AG04450 (cell line): ENCODE measurements at regions of chr19 and their contacts with region 1.

Region 1: DNA sequence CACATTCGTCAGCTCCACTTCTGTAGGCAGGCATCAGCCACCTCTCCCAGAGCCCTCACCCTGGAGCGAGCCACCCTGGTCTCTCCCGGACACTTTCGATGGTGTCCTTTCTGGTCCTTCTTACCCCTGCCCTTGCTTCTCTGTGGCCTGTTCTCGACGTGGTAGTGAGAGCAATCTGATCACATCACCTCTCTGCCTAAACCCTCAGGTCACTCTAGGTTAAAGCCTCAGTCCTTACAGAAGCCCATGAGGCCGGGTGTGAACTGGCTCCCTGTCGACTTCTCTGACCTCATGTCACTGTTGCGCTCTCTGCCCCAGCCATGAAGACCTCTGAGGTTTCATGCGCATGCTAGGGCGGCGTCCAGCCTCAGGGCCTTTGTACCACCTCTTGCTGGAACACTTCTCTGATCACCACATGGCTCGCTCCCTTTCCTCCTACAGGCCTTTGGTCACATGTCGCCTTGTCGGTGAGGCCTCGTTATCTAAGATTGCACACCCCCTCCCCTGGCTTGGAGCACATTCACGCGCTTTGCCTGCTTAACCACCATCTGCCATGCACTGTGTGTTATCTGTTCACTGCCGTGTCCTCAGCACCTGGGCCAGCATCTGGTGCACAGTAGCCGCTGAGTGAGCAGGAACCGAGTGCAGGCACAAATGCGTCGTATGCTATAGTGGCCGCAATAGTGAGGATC is 101.5 kb downstream of the DPF1 start:
- DNase-seq: no peak
- H3K4me3 ChIP-seq: no peak overlapping the region
- H3K27ac ChIP-seq: no peak overlapping the region
- H3K27me3 ChIP-seq: no peaks in the 10 kb centered on the region
- CTCF ChIP-seq: no peak

Region 2: DNA sequence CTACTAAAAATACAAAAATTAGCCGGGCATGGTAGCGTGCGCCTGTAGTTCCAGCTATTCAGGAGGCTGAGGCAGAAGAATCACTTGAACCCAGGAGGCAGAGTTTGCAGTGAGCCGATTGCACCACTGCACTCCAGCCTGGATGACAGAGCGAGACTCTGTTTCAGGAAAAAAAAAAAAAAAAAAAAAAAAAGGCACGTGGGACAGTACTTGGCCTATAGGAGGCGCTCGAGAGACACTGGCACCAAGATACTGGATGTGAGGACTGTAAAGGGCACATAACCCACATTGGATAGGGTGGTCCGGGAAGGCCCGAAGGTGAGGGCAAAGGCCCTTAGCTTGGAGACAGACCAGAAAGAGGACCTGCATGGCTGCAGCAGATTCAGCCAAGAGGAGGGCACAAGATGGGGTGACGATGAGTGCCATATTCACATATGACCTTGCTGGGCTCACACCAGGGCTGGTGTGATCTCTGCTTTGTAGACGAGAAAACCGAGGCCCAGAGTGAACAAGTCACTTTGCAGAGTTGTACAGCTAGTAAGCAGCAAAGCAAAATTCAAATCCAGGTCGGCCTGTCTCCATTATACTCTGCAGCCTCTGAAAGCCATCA is 12.1 kb after region 1 on chr19:
- CTCF ChIA-PET with region 1: interaction called, 12 read pairs
- POLR2A ChIA-PET with region 1: no interaction called
- DNase-seq: no peak
- H3K4me3 ChIP-seq: no peak overlapping the region
- H3K27ac ChIP-seq: no peak overlapping the region
- H3K27me3 ChIP-seq: no peaks in the 10 kb centered on the region
- CTCF ChIP-seq: peak; percentile 67

Region 3: GRCh38 chr19:38155453-38155852 is 32.9 kb after region 1 on chr19:
- CTCF ChIA-PET with region 1: no interaction called
- POLR2A ChIA-PET with region 1: interaction called, 15 read pairs
- DNase-seq: no peak
- H3K4me3 ChIP-seq: no peak overlapping the region
- H3K27ac ChIP-seq: no peak overlapping the region
- H3K27me3 ChIP-seq: no peaks in the 10 kb centered on the region
- CTCF ChIP-seq: no peak